ENCODE measurements at regions of chr17 and their contacts with region 1.

Region 1: DNA sequence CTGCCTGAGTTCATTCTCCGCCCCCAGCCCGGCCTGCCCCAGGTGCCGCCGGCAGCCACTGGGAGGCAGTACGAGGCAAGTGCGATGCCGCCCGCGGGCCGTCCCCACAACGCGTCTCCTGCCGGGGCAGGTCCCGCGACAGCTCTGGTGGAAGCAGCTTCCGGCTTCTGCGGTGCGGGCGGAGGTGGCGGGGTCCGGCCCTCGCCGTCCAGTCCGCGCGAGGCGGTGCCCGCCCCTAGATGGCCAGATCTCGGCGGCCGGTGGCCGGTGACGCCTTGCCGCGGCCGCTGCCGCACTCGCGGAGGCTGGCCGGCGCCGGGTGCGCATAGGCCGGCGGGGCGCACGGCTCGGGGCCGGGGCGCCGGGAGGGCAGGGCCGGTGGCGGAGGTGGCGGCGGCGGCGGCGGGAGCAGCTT is 1.8 kb downstream of the GJD3 start:
- DNase-seq: peak; percentile 85
- H3K4me3 ChIP-seq: peak overlapping the region in 3 of 4 donors; percentile 46 to 54 (median 54)
- H3K27ac ChIP-seq: peak overlapping the region in 3 of 4 donors; percentile 32 to 67 (median 34)
- H3K4me1 ChIP-seq: peaks cover 6 to 14% (median 12%) of the 10 kb centered on the region in 4 donors
- H3K27me3 ChIP-seq: no peaks in the 10 kb centered on the region
- CTCF ChIP-seq: peak; percentile 45 to 80 (median 58)
- EP300 ChIP-seq: no peak
- POLR2A ChIP-seq: peak; percentile 35

Region 2: GRCh38 chr17:40191237-40192208 is 171.2 kb before region 1 on chr17:
- in situ Hi-C with region 1: loop called in 1 of 4 experiments (anchors 10 kb)
- intact Hi-C with region 1: no loop called
- DNase-seq: peak; percentile 77
- H3K4me3 ChIP-seq: peak overlapping the region; percentile 31 to 57 (median 38)
- H3K27ac ChIP-seq: peak overlapping the region; percentile 20 to 74 (median 44)
- H3K4me1 ChIP-seq: peaks cover 0 to 13% (median 7%) of the 10 kb centered on the region in 4 donors
- H3K27me3 ChIP-seq: no peaks in the 10 kb centered on the region
- CTCF ChIP-seq: peak in 4 of 5 experiments; percentile 31 to 52 (median 40)
- EP300 ChIP-seq: no peak
- POLR2A ChIP-seq: no peak

Region 3: DNA sequence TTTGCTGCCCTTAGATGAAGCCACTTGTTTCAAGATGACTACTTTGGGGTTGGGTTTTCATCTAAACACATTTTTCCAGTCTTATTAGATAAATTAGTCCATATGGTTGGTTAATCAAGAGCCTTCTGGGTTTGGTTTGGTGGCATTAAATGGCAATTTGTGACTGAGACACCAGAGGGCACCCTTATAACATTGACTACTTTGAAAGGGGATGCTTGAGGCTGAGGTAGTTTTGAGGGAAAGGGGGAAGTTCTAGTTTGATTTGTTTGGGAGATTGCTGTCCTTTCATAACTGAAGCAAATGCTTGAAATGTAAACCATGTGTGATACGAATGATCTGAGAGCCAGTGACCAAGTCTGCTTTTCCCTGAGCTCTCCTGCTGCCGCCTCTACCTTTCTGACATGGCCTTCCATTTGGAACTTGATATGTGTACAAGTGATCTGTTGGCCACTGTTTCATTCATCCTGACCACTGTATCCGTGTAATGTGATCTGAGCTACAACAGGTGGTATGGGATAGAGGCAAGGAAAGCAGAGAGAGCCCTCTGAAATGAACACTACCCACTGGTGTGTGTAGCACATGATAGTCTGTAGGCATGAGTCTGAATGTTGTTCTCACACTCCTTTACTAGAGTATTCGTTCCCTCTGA is 59.6 kb before region 1 on chr17:
- in situ Hi-C with region 1: loop called in 1 of 4 experiments (anchors 5 kb)
- intact Hi-C with region 1: no loop called
- DNase-seq: peak; percentile 62
- H3K4me3 ChIP-seq: no peak overlapping the region
- H3K27ac ChIP-seq: peak overlapping the region; percentile 59 to 81 (median 74)
- H3K4me1 ChIP-seq: peaks cover 20 to 44% (median 33%) of the 10 kb centered on the region in 4 donors
- H3K27me3 ChIP-seq: no peaks in the 10 kb centered on the region
- CTCF ChIP-seq: peak; percentile 69 to 80 (median 74)
- EP300 ChIP-seq: no peak
- POLR2A ChIP-seq: no peak

Region 4: GRCh38 chr17:40417609-40418427 is 55.1 kb after region 1 on chr17 and contains the start of gene TOP2A:
- in situ Hi-C with region 1: loop called in 1 of 4 experiments (anchors 10 kb)
- intact Hi-C with region 1: loop called (anchors 5 kb)
- DNase-seq: peak; percentile 98
- H3K4me3 ChIP-seq: peak within 1 kb of the TSS; percentile 48 to 82 (median 61)
- H3K27ac ChIP-seq: peak within 1 kb of the TSS; percentile 74 to 80 (median 76)
- H3K4me1 ChIP-seq: peaks cover 4 to 30% (median 11%) of the 10 kb centered on the region in 4 donors
- H3K27me3 ChIP-seq: no peaks in the 10 kb centered on the region
- CTCF ChIP-seq: no peak
- EP300 ChIP-seq: no peak
- POLR2A ChIP-seq: no peak
- total RNA-seq, gene TOP2A: 0.37 to 25.5 (median 7.5) TPM

Region 5: GRCh38 chr17:40536295-40537171 is 173.8 kb after region 1 on chr17:
- in situ Hi-C with region 1: loop called in 2 of 4 experiments (anchors 10 kb)
- intact Hi-C with region 1: no loop called
- DNase-seq: no peak
- H3K4me3 ChIP-seq: no peak overlapping the region
- H3K27ac ChIP-seq: peak overlapping the region; percentile 31 to 92 (median 76)
- H3K4me1 ChIP-seq: peaks cover 24 to 58% (median 34%) of the 10 kb centered on the region in 4 donors
- H3K27me3 ChIP-seq: no peaks in the 10 kb centered on the region
- CTCF ChIP-seq: no peak
- EP300 ChIP-seq: peak; percentile 75
- POLR2A ChIP-seq: no peak

Region 6: DNA sequence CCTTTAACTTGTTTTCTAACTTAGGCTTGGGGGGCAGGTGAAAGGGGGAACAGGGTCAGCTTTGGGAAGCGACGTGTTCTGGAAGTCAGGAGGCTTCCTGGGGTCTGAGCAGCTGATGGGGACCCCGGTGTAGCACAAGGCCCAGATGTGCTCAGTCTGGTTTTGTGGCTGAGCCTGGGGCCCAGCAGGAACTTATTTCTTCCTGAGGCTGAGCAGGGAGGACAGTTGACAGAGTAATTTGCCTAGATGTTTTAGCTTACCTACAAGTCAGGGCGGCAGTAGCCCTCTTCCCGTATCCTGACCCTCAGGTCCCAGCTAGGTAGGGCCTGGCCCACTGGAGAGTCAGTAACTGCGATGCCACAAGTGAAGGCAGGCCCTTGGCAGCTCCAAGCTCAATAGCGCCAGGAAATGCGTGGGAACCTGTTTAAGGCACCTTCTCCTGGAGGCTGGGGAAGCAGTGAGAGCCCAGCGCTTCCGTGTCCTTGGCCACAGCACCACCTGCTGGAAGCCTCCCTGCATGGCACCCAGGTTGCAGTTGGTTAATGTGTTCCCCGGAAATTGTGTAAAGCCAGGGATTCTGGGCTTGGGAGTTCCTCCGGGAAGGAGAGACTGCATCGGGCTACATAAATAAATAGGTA is 197.4 kb after region 1 on chr17:
- in situ Hi-C with region 1: no loop called
- intact Hi-C with region 1: loop called (anchors 2 kb)
- DNase-seq: peak; percentile 94
- H3K4me3 ChIP-seq: peak overlapping the region in 1 of 4 donors; percentile 33
- H3K27ac ChIP-seq: peak overlapping the region; percentile 11 to 65 (median 60)
- H3K4me1 ChIP-seq: peaks cover 6 to 23% (median 9%) of the 10 kb centered on the region in 4 donors
- H3K27me3 ChIP-seq: no peaks in the 10 kb centered on the region
- CTCF ChIP-seq: peak; percentile 93 to 98 (median 96)
- EP300 ChIP-seq: no peak
- POLR2A ChIP-seq: no peak

Region 7: GRCh38 chr17:42097691-42098631 is 1735.3 kb after region 1 on chr17 and contains the start of gene ZNF385C:
- in situ Hi-C with region 1: no loop called
- intact Hi-C with region 1: loop called (anchors 5 kb)
- DNase-seq: no peak
- H3K4me3 ChIP-seq: peak within 1 kb of the TSS in 2 of 4 donors; percentile 15 to 16
- H3K27ac ChIP-seq: no peak within 1 kb of the TSS
- H3K4me1 ChIP-seq: peaks cover 0 to 11% (median 9%) of the 10 kb centered on the region in 4 donors
- H3K27me3 ChIP-seq: peaks cover 32% of the 10 kb centered on the region
- CTCF ChIP-seq: no peak
- EP300 ChIP-seq: no peak
- POLR2A ChIP-seq: no peak
- total RNA-seq, gene ZNF385C: 0.27 to 0.48 TPM in 2 of 4 donors, not detected in the others